Mucosa of descending colon (tissue), 3 donors: ENCODE measurements at regions of chr11 and their contacts with region 1.

Region 1: GRCh38 chr11:133082851-133083488 is 449.3 kb downstream of the OPCML start:
- DNase-seq: peak; percentile 57 to 71 (median 61)
- ATAC-seq: peak; percentile 98
- H3K4me3 ChIP-seq: no peak overlapping the region
- H3K4me1 ChIP-seq: peaks cover 5% of the 10 kb centered on the region
- CTCF ChIP-seq: peak; percentile 87

Region 2: DNA sequence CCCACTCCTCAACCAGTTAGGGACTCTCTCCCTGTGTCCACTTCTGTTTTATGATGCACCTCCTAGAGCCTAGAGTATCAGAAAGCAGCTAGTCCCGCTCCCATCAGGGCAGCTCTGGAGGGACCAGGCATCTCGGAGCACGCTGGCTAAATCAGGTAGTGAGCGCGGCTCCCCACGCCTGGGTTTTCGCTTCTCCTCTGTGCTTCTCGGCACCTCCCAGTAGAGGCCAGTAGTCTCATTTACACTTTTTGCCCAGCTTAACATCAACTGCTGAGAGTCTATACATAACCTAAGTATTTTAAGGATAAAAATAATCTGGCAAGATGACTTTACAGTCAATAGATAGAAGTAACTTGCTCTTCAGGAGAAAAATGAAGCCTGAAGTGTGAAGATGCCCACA is 24.5 kb before region 1 on chr11:
- intact Hi-C with region 1: no loop called
- DNase-seq: no peak
- ATAC-seq: no peak
- H3K4me3 ChIP-seq: no peak overlapping the region
- H3K4me1 ChIP-seq: no peaks in the 10 kb centered on the region
- CTCF ChIP-seq: no peak

Region 3: GRCh38 chr11:133137939-133138338 is 55.0 kb after region 1 on chr11:
- intact Hi-C with region 1: no loop called
- DNase-seq: no peak
- ATAC-seq: no peak
- H3K4me3 ChIP-seq: no peak overlapping the region
- H3K4me1 ChIP-seq: no peaks in the 10 kb centered on the region
- CTCF ChIP-seq: no peak

Region 4: DNA sequence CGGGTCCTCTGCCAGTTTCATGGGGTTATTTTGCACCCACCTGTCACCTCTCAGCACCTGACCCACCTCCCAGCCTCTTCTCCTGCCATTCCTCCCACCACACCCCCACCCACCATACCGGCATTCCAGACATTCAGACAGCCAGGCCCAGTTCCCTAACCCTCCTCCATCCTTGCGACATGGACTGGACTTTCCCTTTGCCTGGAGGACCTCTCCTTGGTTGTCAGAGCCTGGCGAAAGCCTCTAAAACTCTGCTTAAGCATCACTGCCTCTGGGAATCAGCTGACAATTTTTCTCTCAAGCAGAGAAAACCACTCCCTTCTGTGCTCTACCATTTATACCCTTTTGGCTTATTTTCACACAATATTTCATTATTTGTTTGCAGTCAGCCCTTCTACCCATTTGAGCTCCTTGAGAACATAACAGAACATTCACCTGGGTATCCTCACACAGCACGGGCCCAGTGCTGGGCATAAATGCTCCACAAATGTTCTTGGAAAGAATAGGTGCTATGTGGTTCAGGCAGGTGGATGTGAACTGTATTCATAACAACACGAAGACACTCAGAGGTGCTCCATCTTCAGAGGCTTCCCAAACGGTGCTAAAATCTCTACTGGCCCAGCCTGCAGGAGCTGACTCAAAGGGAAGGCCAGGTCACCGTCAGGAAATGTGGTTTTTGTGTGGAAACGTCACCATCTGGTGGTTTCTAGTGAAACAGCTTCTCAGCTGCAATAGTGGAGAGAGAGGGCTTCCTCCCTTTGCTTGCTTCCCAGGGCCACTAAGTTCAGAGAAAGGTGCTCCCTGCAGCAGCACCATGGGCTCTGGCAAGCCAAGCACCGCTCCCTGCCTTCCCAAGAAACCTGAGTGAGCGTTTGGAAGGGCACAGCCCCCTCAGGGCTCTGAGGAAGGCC is 752.0 kb after region 1 on chr11:
- intact Hi-C with region 1: loop called in 1 of 2 experiments (anchors 5 kb)
- DNase-seq: peak in 1 of 3 donors; percentile 24
- ATAC-seq: peak; percentile 61
- H3K4me3 ChIP-seq: no peak overlapping the region
- H3K4me1 ChIP-seq: no peaks in the 10 kb centered on the region
- CTCF ChIP-seq: no peak